Endothelial cell of umbilical vein (primary cell): ENCODE measurements at regions of chr12 and their contacts with region 1.

Region 1: GRCh38 chr12:56688129-56688845 is at the start of gene PTGES3:
- DNase-seq: peak; percentile 99
- H3K4me3 ChIP-seq: peak within 1 kb of the TSS; percentile 61 to 91 (median 84)
- H3K27ac ChIP-seq: peak within 1 kb of the TSS; percentile 90
- H3K4me1 ChIP-seq: peaks cover 27% of the 10 kb centered on the region
- H3K27me3 ChIP-seq: no peaks in the 10 kb centered on the region
- CTCF ChIP-seq: peak in 1 of 2 donors; percentile 3
- POLR2A ChIP-seq: peak; percentile 88
- total RNA-seq, gene PTGES3: 262 and 278 TPM in 2 replicates

Region 2: GRCh38 chr12:56760460-56760859 is 72.2 kb after region 1 on chr12:
- CTCF ChIA-PET with region 1: no interaction called
- POLR2A ChIA-PET with region 1: no interaction called
- dilution Hi-C with region 1: no loop called
- intact Hi-C with region 1: no loop called
- DNase-seq: no peak
- H3K4me3 ChIP-seq: no peak overlapping the region
- H3K27ac ChIP-seq: no peak overlapping the region
- H3K4me1 ChIP-seq: no peaks in the 10 kb centered on the region
- H3K27me3 ChIP-seq: peaks cover 0 to 2% of the 10 kb centered on the region in 2 experiments
- CTCF ChIP-seq: no peak
- POLR2A ChIP-seq: no peak

Region 3: DNA sequence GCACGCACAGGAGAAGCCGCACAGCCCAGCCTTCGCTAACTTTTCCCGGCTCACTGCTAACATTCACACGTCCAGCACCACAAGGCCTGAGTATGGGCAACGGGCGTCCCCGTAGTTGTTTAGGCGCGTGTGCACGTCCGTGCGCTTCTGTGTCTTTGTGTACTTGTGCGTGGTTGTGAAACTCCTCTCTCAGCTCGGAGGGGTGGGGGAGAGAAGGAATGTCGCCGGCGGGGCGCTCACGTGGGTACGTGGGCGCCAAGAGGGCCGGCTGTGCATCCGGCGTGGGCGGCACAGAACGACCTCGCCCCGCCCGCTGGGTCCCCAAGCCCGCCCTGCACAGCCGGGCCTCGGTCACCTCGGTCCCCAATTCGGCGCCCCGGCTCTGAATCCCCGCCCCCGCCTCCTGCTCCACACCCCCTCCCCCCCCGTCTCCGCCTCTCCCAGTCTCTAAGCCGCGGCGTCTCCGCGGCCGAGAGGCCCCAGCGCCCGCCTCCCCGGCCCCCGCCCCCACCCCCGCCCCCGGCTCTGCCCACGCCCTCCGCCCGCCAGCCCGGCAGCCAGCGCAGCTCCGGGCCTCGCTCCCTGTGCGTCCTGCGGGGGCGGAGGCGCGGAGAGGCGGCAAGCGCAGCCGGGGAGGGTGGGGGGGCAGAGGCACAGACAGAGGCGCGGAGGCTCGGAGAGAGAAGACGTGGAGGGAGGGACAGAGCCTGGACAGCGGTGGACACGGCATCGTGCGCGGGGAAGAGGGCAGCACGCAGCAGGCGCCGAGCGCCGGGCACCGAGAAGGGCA is 400.4 kb after region 1 on chr12 and contains the start of gene NAB2:
- CTCF ChIA-PET with region 1: no interaction called
- POLR2A ChIA-PET with region 1: no interaction called
- dilution Hi-C with region 1: no loop called
- intact Hi-C with region 1: loop called (anchors 5 kb)
- DNase-seq: peak; percentile 89
- H3K4me3 ChIP-seq: peak within 1 kb of the TSS; percentile 41 to 86 (median 49)
- H3K27ac ChIP-seq: peak within 1 kb of the TSS; percentile 76
- H3K4me1 ChIP-seq: peaks cover 19% of the 10 kb centered on the region
- H3K27me3 ChIP-seq: no peaks in the 10 kb centered on the region
- CTCF ChIP-seq: no peak
- POLR2A ChIP-seq: peak; percentile 57
- total RNA-seq, gene NAB2: 13.4 and 15.9 TPM in 2 replicates